Caco-2 (cell line): ENCODE measurements at regions of chr4 and their contacts with region 1.

Region 1: DNA sequence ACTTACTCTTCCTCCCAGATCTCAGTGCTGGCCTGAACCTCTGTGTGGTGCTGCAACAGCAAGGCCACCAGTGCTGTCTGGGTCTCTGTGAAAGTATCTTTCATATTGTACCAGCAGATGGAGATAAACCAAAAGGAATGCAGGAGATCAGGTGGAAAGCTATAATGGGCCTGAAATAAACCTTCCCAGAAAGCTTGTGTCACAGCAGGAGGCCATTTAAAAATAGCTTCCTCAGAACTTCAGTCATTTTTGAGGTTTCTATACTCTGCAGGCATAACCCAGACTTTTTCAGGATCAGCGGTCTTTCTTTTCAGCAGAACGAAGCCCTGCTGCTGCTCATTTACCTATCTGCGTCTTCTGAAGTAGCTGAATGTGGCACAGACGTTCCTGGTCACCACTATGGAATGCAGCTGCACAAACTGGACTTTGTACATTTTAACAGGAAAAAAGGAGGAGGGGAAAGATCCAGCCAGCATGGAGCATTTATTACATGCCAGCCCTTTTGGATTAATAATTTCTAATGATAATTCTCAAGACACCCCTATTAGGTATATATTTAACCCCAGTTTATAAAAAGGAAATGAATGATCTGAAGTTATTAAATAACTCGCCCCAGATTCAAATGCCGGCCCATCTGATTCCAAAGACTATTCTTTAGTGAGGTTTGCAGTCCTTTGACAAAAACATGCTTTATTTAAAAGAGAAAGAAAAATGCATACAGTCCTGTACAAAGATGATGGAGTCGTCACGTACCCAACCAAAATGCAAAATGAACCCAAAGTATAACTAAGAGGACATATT is 119.7 kb downstream of the NFKB1 start:
- DNase-seq: peak; percentile 74 to 81
- H3K4me3 ChIP-seq: peak overlapping the region; percentile 30
- H3K4me3 Mint-ChIP-seq: peak overlapping the region; percentile 73
- H3K27ac Mint-ChIP-seq: peak overlapping the region; percentile 87
- H3K4me1 ChIP-seq: peaks cover 28% of the 10 kb centered on the region
- H3K4me1 Mint-ChIP-seq: peaks cover 39% of the 10 kb centered on the region
- H3K27me3 ChIP-seq: no peaks in the 10 kb centered on the region
- H3K27me3 Mint-ChIP-seq: no peaks in the 10 kb centered on the region
- CTCF ChIP-seq: peak; percentile 60

Region 2: GRCh38 chr4:102344954-102345794 is 275.7 kb before region 1 on chr4 and contains the start of gene SLC39A8:
- CTCF ChIA-PET with region 1: no interaction called
- POLR2A ChIA-PET with region 1: no interaction called
- intact Hi-C with region 1: loop called (anchors 10 kb)
- DNase-seq: peak; percentile 85 to 90
- H3K4me3 ChIP-seq: peak within 1 kb of the TSS; percentile 42
- H3K4me3 Mint-ChIP-seq: peak within 1 kb of the TSS; percentile 81
- H3K27ac Mint-ChIP-seq: peak within 1 kb of the TSS; percentile 45
- H3K4me1 ChIP-seq: peaks cover 19% of the 10 kb centered on the region; the same call in 1 of the 2 replicates
- H3K4me1 Mint-ChIP-seq: peaks cover 9% of the 10 kb centered on the region
- H3K27me3 ChIP-seq: no peaks in the 10 kb centered on the region; the same call in 1 of the 2 replicates
- H3K27me3 Mint-ChIP-seq: peaks cover 7% of the 10 kb centered on the region
- CTCF ChIP-seq: peak; percentile 73
- total RNA-seq, gene SLC39A8: 14.1 and 15.5 TPM in 2 replicates

Region 3: GRCh38 chr4:102589743-102590142 is 31.2 kb before region 1 on chr4:
- CTCF ChIA-PET with region 1: no interaction called
- POLR2A ChIA-PET with region 1: no interaction called
- intact Hi-C with region 1: no loop called
- DNase-seq: no peak
- H3K4me3 ChIP-seq: no peak overlapping the region
- H3K4me3 Mint-ChIP-seq: no peak overlapping the region
- H3K27ac Mint-ChIP-seq: no peak overlapping the region
- H3K4me1 ChIP-seq: no peaks in the 10 kb centered on the region
- H3K4me1 Mint-ChIP-seq: no peaks in the 10 kb centered on the region
- H3K27me3 ChIP-seq: no peaks in the 10 kb centered on the region
- H3K27me3 Mint-ChIP-seq: no peaks in the 10 kb centered on the region
- CTCF ChIP-seq: no peak

Region 4: DNA sequence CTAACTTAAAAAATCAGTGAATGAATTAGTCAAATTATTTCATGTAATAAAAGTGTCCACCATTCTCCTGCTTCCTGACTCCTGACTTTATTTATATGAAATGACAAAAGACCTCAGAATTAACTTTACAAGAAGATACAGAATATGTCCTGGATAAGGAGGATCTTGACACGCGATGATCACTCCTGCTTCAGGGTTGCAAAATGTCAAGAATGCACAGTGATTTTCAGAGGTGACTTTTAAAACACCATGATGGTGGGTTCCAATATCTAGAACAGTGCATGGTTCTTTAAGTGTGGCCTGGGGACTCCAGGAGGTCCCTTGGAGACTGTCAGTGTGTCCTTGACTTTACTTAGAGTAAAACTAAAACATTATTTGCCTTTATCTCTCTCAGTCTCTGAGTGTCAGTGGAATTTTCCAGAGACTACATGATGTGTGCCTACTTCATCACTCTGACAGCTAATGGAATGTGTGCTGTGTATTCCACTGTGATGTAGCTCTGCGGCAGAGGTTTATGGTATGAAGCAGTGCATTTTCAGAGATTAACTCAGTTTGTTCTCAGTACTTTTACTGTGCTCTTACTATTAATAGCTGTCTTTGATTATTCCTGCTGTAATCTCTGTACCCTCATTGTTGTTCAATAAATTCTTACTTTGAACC is 54.1 kb after region 1 on chr4:
- CTCF ChIA-PET with region 1: interaction called, 7 read pairs
- POLR2A ChIA-PET with region 1: no interaction called
- intact Hi-C with region 1: loop called (anchors 2 kb)
- DNase-seq: peak; percentile 68 to 69
- H3K4me3 ChIP-seq: no peak overlapping the region
- H3K4me3 Mint-ChIP-seq: no peak overlapping the region
- H3K27ac Mint-ChIP-seq: peak overlapping the region; percentile 87
- H3K4me1 ChIP-seq: peaks cover 60% of the 10 kb centered on the region
- H3K4me1 Mint-ChIP-seq: peaks cover 15% of the 10 kb centered on the region
- H3K27me3 ChIP-seq: no peaks in the 10 kb centered on the region
- H3K27me3 Mint-ChIP-seq: no peaks in the 10 kb centered on the region
- CTCF ChIP-seq: no peak

Region 5: GRCh38 chr4:102723511-102723910 is 102.6 kb after region 1 on chr4:
- CTCF ChIA-PET with region 1: no interaction called
- POLR2A ChIA-PET with region 1: no interaction called
- intact Hi-C with region 1: no loop called
- DNase-seq: no peak
- H3K4me3 ChIP-seq: no peak overlapping the region
- H3K4me3 Mint-ChIP-seq: no peak overlapping the region
- H3K27ac Mint-ChIP-seq: no peak overlapping the region
- H3K4me1 ChIP-seq: peaks cover under 1% of the 10 kb centered on the region; the same call in 1 of the 2 replicates
- H3K4me1 Mint-ChIP-seq: peaks cover 4% of the 10 kb centered on the region
- H3K27me3 ChIP-seq: no peaks in the 10 kb centered on the region
- H3K27me3 Mint-ChIP-seq: no peaks in the 10 kb centered on the region
- CTCF ChIP-seq: no peak

Region 6: DNA sequence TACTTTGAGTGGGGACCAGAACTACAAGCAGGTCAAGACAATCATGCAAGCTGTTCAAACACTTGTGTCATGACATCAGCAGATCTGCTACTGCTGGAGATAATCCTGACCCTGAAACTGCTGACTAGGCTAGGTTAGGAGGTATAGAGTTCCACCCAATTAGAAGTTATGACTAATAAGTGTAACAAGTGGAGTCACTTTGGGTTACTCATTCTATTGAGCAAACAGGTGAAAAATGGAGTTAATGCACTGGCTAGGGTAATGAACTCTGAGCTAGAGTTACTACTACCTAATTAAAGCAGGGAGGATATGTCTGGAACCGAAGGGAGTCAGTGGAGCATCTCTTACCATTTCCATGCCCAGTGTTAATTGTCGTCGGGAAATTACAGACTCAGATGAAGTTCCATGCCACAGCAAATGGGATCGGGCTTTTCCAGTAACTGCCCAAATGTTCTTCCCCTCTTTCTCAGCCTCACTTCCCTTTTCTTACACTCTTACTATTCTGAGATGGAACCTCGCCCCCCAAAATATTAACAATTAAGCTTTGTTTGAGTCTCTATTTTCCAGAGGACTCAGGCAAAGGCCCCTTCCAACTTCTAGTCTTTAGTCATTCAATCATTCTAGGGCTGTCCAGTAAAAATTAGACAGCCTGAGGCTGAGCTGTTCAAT is 159.7 kb after region 1 on chr4:
- CTCF ChIA-PET with region 1: interaction called, 6 read pairs
- POLR2A ChIA-PET with region 1: no interaction called
- intact Hi-C with region 1: loop called (anchors 5 kb)
- DNase-seq: peak; percentile 42 to 49
- H3K4me3 ChIP-seq: no peak overlapping the region
- H3K4me3 Mint-ChIP-seq: no peak overlapping the region
- H3K27ac Mint-ChIP-seq: no peak overlapping the region
- H3K4me1 ChIP-seq: peaks cover 26% of the 10 kb centered on the region
- H3K4me1 Mint-ChIP-seq: peaks cover 28% of the 10 kb centered on the region
- H3K27me3 ChIP-seq: no peaks in the 10 kb centered on the region
- H3K27me3 Mint-ChIP-seq: no peaks in the 10 kb centered on the region
- CTCF ChIP-seq: no peak

Region 7: DNA sequence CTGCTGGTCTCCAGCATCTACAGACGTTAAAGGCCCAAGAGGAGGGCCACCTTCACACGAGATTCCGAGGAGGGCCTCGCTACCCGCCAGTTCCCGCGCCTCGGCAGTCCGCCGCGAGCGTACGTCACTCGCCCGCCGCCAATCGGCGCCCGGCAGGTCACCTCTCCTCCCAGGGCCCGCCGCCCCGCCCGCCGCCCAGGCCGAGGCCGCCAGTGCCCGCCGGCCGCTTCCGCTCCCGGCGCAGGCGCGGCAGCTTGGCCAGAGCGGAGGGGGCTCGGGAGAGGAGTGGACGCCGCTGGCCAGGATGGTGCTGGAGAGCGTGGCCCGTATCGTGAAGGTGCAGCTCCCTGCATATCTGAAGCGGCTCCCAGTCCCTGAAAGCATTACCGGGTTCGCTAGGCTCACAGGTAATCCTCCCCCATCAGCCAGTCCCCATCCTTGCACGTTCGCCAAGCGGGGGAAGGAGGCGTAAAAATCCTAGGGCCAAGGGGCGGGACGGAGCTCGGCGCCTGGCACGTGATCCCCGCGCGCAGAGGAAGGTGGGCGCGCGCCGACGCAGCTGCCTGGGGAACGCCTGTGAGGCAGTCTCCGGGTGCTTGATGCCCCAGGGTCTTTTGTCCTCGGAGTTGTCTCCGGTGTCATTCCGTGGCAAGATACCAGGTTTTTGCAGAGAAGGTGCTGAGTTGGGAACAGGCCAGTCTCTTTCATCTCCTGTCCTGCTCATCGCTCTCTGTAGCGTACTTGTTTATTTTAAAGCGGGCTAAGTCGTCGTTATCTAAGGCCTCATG is 248.1 kb after region 1 on chr4 and contains the start of gene CISD2:
- CTCF ChIA-PET with region 1: no interaction called
- POLR2A ChIA-PET with region 1: interaction called, 4 read pairs
- intact Hi-C with region 1: loop called (anchors 2 kb)
- DNase-seq: peak; percentile 93 to 95
- H3K4me3 ChIP-seq: peak within 1 kb of the TSS; percentile 84
- H3K4me3 Mint-ChIP-seq: peak within 1 kb of the TSS; percentile 97
- H3K27ac Mint-ChIP-seq: peak within 1 kb of the TSS; percentile 95
- H3K4me1 ChIP-seq: 0 out of 2 replicates have a peak, but pooled peaks cover 3% of the 10 kb centered on the region
- H3K4me1 Mint-ChIP-seq: peaks cover 6% of the 10 kb centered on the region
- H3K27me3 ChIP-seq: no peaks in the 10 kb centered on the region
- H3K27me3 Mint-ChIP-seq: no peaks in the 10 kb centered on the region
- CTCF ChIP-seq: no peak
- total RNA-seq, gene CISD2: 54.0 and 58.6 TPM in 2 replicates

Region 8: GRCh38 chr4:103091601-103092223 is 470.8 kb after region 1 on chr4:
- CTCF ChIA-PET with region 1: interaction called, 3 read pairs
- POLR2A ChIA-PET with region 1: no interaction called
- intact Hi-C with region 1: loop called (anchors 1 kb)
- DNase-seq: peak; percentile 42 to 56
- H3K4me3 ChIP-seq: no peak overlapping the region
- H3K4me3 Mint-ChIP-seq: no peak overlapping the region
- H3K27ac Mint-ChIP-seq: no peak overlapping the region
- H3K4me1 ChIP-seq: no peaks in the 10 kb centered on the region
- H3K4me1 Mint-ChIP-seq: peaks cover 3% of the 10 kb centered on the region
- H3K27me3 ChIP-seq: no peaks in the 10 kb centered on the region
- H3K27me3 Mint-ChIP-seq: no peaks in the 10 kb centered on the region
- CTCF ChIP-seq: peak; percentile 44 to 57